Activated T-helper 1 cell treated with anti-CD3 and anti-CD28 coated beads, Interleukin-12 subunit alpha, Interleukin-12 subunit beta, Interleukin-2, Interleukin-4 antibody, amounts not matched to agents 30 ng/mL and 10 ng/mL and 1 ng/mL, durations not matched to agents 14 hours and 24 hours and 36 hours (primary cell): ENCODE measurements at regions of chrX and their contacts with region 1.

Region 1: GRCh38 chrX:154515878-154516655 is at the start of gene FAM3A:
- DNase-seq: peak; percentile 87
- H3K4me3 Mint-ChIP-seq: peak within 1 kb of the TSS; percentile 87
- H3K27ac Mint-ChIP-seq: peak within 1 kb of the TSS; percentile 91
- H3K4me1 Mint-ChIP-seq: peaks cover 29% of the 10 kb centered on the region
- H3K27me3 Mint-ChIP-seq: no peaks in the 10 kb centered on the region
- total RNA-seq, gene FAM3A: 35.9 and 40.1 TPM in 2 replicates

Region 2: DNA sequence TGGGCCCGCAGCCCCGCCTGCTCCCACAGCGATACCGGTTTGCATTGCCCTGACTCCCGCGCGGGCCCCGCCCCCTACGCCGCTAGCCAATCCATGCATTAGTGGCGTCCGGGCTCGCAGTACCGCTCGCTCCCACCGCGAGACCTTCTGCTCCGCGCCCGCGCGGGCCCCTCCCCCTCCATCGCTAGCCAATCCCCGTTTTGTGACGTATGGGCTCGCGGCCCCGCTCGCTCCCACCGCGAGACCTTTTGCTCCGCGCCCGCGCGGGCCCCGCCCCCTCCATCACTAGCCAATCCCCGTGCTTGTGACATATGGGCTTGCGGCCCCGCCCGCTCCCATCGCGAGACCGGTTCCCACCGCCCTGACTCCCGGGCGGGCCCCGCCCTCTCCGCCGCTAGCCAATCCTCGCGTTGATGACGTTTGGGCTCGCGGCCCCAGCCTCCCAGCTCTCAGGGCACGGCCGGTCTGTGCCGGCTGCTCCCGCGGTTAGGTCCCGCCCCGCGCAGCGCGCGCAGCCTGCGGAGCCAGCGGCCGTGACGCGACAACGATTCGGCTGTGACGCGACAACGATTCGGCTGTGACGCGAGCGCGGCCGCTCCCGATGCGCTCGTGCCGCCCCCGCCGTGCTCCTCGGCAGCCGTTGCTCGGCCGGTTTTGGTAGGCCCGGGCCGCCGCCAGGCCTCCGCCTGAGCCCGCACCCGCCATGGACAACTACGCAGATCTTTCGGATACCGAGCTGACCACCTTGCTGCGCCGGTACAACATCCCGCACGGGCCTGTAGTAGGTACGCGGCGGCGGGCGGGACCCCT is 137.1 kb before region 1 on chrX and contains the start of gene EMD:
- intact Hi-C with region 1: loop called (anchors 1 kb)
- DNase-seq: peak; percentile 94
- H3K4me3 Mint-ChIP-seq: peak within 1 kb of the TSS; percentile 89
- H3K27ac Mint-ChIP-seq: peak within 1 kb of the TSS; percentile 81
- H3K4me1 Mint-ChIP-seq: peaks cover 4% of the 10 kb centered on the region
- H3K27me3 Mint-ChIP-seq: no peaks in the 10 kb centered on the region
- total RNA-seq, gene EMD: 83.3 and 85.5 TPM in 2 replicates

Region 3: DNA sequence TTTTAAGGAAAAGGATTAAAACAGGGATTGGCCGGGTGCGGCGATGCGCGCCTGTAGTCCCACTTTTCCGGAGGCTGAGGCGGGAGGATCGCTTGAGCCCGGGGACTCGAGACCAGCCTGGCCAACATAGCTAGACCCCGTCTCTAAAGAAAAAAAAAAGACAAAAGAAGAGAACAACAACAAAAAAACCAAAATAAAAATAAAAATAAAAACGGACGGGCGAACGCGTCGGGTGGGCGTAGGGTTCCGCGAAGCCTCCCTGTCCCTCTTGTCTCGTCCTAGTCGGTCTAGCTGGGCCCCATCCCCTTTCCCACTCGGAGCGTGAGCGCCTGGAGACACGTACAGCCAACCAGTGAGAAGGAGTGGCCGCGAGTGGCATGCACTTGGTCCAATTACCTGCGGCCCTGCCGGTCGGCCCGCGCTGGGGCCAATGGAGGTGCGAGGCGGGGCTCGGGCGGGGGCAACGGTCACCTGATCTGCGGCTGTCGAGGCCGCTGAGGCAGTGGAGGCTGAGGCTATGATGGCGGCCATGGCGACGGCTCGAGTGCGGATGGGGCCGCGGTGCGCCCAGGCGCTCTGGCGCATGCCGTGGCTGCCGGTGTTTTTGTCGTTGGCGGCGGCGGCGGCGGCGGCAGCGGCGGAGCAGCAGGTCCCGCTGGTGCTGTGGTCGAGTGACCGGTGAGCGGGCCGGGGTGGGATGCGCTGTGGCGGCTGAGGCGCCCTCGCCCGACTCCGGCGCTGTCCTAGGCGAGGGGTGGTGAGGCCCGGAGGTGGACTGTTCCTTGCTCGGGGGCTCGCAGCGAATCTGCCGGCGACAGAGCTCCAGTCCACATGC is 87.7 kb before region 1 on chrX and contains the start of gene ATP6AP1:
- intact Hi-C with region 1: loop called (anchors 2 kb)
- DNase-seq: peak; percentile 88
- H3K4me3 Mint-ChIP-seq: peak within 1 kb of the TSS; percentile 83
- H3K27ac Mint-ChIP-seq: peak within 1 kb of the TSS; percentile 80
- H3K4me1 Mint-ChIP-seq: peaks cover 22% of the 10 kb centered on the region
- H3K27me3 Mint-ChIP-seq: no peaks in the 10 kb centered on the region
- total RNA-seq, gene ATP6AP1: 49.8 and 54.3 TPM in 2 replicates

Region 4: GRCh38 chrX:154547245-154548027 is 31.4 kb after region 1 on chrX and contains the start of gene IKBKG:
- intact Hi-C with region 1: loop called (anchors 1 kb)
- DNase-seq: peak; percentile 86
- H3K4me3 Mint-ChIP-seq: peak within 1 kb of the TSS; percentile 96
- H3K27ac Mint-ChIP-seq: peak within 1 kb of the TSS; percentile 98
- H3K4me1 Mint-ChIP-seq: peaks cover 33% of the 10 kb centered on the region
- H3K27me3 Mint-ChIP-seq: no peaks in the 10 kb centered on the region
- total RNA-seq, gene IKBKG: 40.7 and 41.2 TPM in 2 replicates